Activated CD4-positive, alpha-beta memory T cell treated with anti-CD3 and anti-CD28 coated beads, Interleukin-2, amount 10 ng/mL, durations not matched to agents 7 days and 5 days (primary cell): ENCODE measurements at regions of chr4 and their contacts with region 1.

Region 1: GRCh38 chr4:76213415-76214176 is at the start of gene SCARB2:
- DNase-seq: peak; percentile 76
- H3K4me3 Mint-ChIP-seq: peak within 1 kb of the TSS; percentile 79
- H3K27ac Mint-ChIP-seq: peak within 1 kb of the TSS; percentile 61
- H3K4me1 Mint-ChIP-seq: peaks cover 34% of the 10 kb centered on the region
- H3K27me3 Mint-ChIP-seq: no peaks in the 10 kb centered on the region
- total RNA-seq, gene SCARB2: 22.3 to 23.2 TPM

Region 2: DNA sequence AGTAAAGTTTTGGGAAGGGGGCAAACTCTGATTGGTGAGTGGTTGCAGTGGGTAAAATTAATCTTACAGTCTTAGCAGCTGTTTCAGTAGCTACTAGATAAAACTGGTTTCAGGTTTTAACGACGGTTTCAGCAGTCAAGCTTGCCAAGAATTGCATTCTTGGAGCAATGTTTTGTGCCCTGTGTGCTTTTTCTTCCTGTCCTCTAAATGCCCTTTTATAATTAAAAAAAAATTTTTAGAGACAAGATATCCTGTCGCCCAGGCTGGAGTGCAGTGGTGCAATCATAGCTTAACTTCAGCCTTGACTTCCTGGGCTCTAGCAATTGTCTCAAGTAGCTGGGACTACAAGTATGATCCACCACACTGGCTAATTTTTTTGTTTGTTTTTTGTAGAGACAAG is 305.0 kb before region 1 on chr4:
- CTCF ChIA-PET with region 1: no interaction called
- POLR2A ChIA-PET with region 1: no interaction called
- DNase-seq: no peak
- H3K4me3 Mint-ChIP-seq: no peak overlapping the region
- H3K27ac Mint-ChIP-seq: no peak overlapping the region
- H3K4me1 Mint-ChIP-seq: no peaks in the 10 kb centered on the region
- H3K27me3 Mint-ChIP-seq: no peaks in the 10 kb centered on the region

Region 3: GRCh38 chr4:76148142-76148865 is 65.3 kb before region 1 on chr4 and contains the start of gene NUP54:
- CTCF ChIA-PET with region 1: no interaction called
- POLR2A ChIA-PET with region 1: interaction called, 10 read pairs
- DNase-seq: peak; percentile 96
- H3K4me3 Mint-ChIP-seq: peak within 1 kb of the TSS; percentile 89
- H3K27ac Mint-ChIP-seq: peak within 1 kb of the TSS; percentile 81
- H3K4me1 Mint-ChIP-seq: peaks cover 34% of the 10 kb centered on the region
- H3K27me3 Mint-ChIP-seq: no peaks in the 10 kb centered on the region
- total RNA-seq, gene NUP54: 48.9 to 58.6 TPM

Region 4: GRCh38 chr4:76198411-76199237 is 15.0 kb before region 1 on chr4:
- CTCF ChIA-PET with region 1: interaction called, 4 read pairs
- POLR2A ChIA-PET with region 1: interaction called, 12 read pairs
- DNase-seq: peak; percentile 21
- H3K4me3 Mint-ChIP-seq: no peak overlapping the region
- H3K27ac Mint-ChIP-seq: peak overlapping the region; percentile 29
- H3K4me1 Mint-ChIP-seq: peaks cover 34% of the 10 kb centered on the region
- H3K27me3 Mint-ChIP-seq: no peaks in the 10 kb centered on the region

Region 5: DNA sequence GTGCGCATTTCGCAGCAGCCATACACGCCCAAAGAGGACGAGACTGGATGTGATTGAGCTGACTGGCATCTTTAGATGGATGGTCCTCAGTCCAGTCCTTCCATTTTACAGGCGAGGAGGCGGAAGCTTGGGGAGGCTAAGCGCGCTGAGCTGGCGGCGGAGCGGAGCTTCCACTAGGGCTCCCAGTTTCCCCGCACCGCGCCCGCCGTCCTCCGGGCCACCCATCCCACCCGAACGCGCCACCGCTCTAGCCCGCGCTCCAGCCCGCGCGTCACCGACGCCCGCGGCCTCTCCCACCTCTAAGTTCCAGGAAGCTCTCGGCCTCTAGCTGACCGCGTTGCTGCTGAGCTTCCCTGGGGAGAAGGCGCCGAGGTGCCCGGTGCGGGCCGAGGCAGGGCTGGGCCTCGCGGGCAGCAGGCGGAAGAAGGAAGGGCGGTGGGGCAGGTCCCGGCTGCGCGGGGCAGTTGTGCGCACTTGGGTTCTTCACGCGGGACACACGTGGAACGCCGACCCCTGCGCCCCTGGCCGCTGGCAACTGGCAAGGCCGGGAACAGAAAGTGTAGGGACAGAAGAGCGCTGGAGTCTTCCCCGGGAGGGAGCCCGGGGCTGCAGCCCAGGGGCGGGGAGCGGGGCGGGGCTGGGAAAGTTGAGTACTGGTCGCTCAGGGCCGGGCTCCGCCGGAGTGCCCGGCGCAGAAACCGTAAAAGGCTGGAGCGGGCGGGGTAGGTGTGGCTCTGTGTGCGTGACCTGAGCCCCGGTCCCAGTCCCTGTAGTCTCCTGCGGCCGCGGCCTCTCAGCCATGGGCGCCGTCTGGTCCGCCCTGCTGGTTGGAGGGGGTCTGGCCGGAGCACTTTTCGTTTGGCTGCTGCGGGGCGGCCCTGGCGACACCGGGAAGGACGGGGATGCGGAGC is 92.6 kb after region 1 on chr4 and contains the start of gene STBD1:
- CTCF ChIA-PET with region 1: interaction called, 15 read pairs
- POLR2A ChIA-PET with region 1: interaction called, 5 read pairs
- DNase-seq: peak; percentile 55
- H3K4me3 Mint-ChIP-seq: peak within 1 kb of the TSS; percentile 78
- H3K27ac Mint-ChIP-seq: peak within 1 kb of the TSS; percentile 84
- H3K4me1 Mint-ChIP-seq: peaks cover 49% of the 10 kb centered on the region
- H3K27me3 Mint-ChIP-seq: no peaks in the 10 kb centered on the region
- total RNA-seq, gene STBD1: 5.5 to 5.8 TPM